Mammary epithelial cell (primary cell): ENCODE measurements at regions of chr18 and their contacts with region 1.

Region 1: GRCh38 chr18:4797002-4797685 is 342.0 kb upstream of the DLGAP1 start:
- DNase-seq: peak; percentile 1
- H3K4me3 ChIP-seq: no peak overlapping the region
- H3K27ac ChIP-seq: no peak overlapping the region
- H3K4me1 ChIP-seq: no peaks in the 10 kb centered on the region
- H3K27me3 ChIP-seq: no peaks in the 10 kb centered on the region
- CTCF ChIP-seq: no peak

Region 2: GRCh38 chr18:4750393-4751346 is 46.5 kb before region 1 on chr18:
- CTCF ChIA-PET with region 1: no interaction called
- dilution Hi-C with region 1: no loop called
- in situ Hi-C with region 1: no loop called
- intact Hi-C with region 1: no loop called
- DNase-seq: no peak
- H3K4me3 ChIP-seq: no peak overlapping the region
- H3K27ac ChIP-seq: no peak overlapping the region
- H3K4me1 ChIP-seq: no peaks in the 10 kb centered on the region
- H3K27me3 ChIP-seq: no peaks in the 10 kb centered on the region
- CTCF ChIP-seq: no peak

Region 3: GRCh38 chr18:4765401-4765800 is 31.7 kb before region 1 on chr18:
- CTCF ChIA-PET with region 1: no interaction called
- dilution Hi-C with region 1: no loop called
- in situ Hi-C with region 1: no loop called
- intact Hi-C with region 1: no loop called
- DNase-seq: no peak
- H3K4me3 ChIP-seq: no peak overlapping the region
- H3K27ac ChIP-seq: no peak overlapping the region
- H3K4me1 ChIP-seq: no peaks in the 10 kb centered on the region
- H3K27me3 ChIP-seq: no peaks in the 10 kb centered on the region
- CTCF ChIP-seq: no peak

Region 4: DNA sequence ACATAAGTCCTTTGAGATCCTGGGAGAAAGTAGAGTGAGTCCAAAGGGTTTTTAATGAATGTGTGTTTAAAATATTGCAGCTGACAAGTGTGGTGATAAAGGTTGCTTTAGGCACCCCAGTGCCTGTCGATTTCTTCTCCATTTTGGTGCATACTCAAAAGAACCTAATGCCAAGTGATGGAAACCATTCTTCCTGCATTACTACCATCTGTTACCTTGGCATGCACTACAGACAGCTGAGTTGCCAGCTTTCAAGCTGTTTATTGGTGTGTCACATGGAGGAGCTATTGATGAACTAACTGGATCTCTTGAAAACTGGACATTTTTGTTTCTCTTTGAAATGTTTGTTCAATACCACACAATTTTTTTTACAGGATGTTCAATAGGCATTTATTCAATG is 49.9 kb after region 1 on chr18:
- CTCF ChIA-PET with region 1: no interaction called
- dilution Hi-C with region 1: no loop called
- in situ Hi-C with region 1: no loop called
- intact Hi-C with region 1: loop called (anchors 10 kb)
- DNase-seq: no peak
- H3K4me3 ChIP-seq: no peak overlapping the region
- H3K27ac ChIP-seq: no peak overlapping the region
- H3K4me1 ChIP-seq: peaks cover 4% of the 10 kb centered on the region
- H3K27me3 ChIP-seq: no peaks in the 10 kb centered on the region
- CTCF ChIP-seq: no peak

Region 5: GRCh38 chr18:4858378-4859127 is 61.4 kb after region 1 on chr18:
- CTCF ChIA-PET with region 1: no interaction called
- dilution Hi-C with region 1: no loop called
- in situ Hi-C with region 1: no loop called
- intact Hi-C with region 1: no loop called
- DNase-seq: no peak
- H3K4me3 ChIP-seq: no peak overlapping the region
- H3K27ac ChIP-seq: no peak overlapping the region
- H3K4me1 ChIP-seq: no peaks in the 10 kb centered on the region
- H3K27me3 ChIP-seq: no peaks in the 10 kb centered on the region
- CTCF ChIP-seq: no peak

Region 6: DNA sequence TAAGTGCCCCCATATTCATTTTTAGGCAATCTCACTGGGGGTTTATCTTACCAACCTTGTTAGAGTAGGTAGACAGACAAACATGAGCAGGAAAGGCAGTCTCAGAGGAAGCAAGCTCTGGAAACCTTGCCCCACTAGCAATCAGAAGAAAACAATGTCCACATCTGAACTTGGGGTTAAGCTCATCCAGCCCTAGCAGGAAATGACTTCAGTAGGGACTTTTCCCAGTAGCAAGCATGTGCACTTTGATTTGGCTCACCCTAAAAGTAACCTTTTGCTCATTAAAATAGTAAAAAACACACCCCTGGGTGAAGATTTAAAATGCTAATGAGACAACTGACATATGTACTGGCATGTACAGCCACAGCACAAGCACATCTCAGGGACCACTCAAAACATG is 224.4 kb after region 1 on chr18:
- CTCF ChIA-PET with region 1: no interaction called
- dilution Hi-C with region 1: no loop called
- in situ Hi-C with region 1: no loop called
- intact Hi-C with region 1: no loop called
- DNase-seq: no peak
- H3K4me3 ChIP-seq: no peak overlapping the region
- H3K27ac ChIP-seq: no peak overlapping the region
- H3K4me1 ChIP-seq: no peaks in the 10 kb centered on the region
- H3K27me3 ChIP-seq: no peaks in the 10 kb centered on the region
- CTCF ChIP-seq: no peak